A549 (cell line): ENCODE measurements at regions of chr11 and their contacts with region 1.

Region 1: GRCh38 chr11:130390071-130390758 is 38.2 kb downstream of the ADAMTS8 start:
- DNase-seq: peak; percentile 40 to 52
- ATAC-seq: peak; percentile 76 to 91; a peak in 5 of 6 replicates
- H3K4me3 ChIP-seq: no peak overlapping the region
- H3K27ac ChIP-seq: no peak overlapping the region
- H3K4me1 ChIP-seq: 0 out of 3 replicates have a peak, but pooled peaks cover 8% of the 10 kb centered on the region
- CTCF ChIP-seq: peak; percentile 46
- EP300 ChIP-seq: no peak
- POLR2A ChIP-seq: no peak
- RAD21 ChIP-seq: peak; percentile 47 to 59

Region 2: DNA sequence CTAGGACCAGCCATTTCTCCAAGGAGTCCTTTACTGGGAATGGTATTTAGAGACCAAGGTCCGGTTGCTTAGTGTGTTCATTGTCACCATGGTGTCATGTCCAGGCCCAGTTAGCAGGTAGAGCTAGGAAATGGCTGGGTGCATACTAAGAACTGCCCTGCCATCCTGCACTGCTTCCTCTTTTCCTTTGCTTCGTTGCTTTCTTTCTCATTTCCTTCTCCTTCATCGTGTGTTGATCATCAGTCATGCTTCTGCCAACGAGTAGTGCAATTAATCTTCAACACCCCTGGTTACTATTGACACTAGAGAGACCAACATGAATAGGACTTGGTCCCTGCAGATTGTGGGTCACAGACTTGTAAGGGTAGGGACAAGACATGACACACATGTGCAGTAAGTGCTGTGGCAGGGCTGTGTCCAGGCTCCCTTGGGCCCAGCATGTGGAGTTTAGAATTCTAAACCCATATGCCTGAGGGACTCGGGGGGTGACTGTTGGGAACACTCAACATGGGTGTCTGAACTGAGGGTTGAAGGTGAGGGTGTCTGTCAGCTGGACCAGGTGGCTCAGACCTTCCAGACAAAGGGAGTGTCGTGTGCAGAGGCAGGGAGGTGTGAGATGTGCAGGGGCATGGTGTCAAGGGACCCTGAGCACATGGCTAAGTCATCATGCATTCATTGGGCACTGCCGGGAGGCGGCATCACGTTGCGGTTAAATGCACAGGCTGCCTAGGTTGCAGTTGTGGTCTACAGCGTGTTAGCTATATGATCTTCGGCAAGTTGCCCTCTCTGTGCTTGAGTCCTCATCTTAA is 188.0 kb before region 1 on chr11:
- CTCF ChIA-PET with region 1: no interaction called
- POLR2A ChIA-PET with region 1: no interaction called
- DNase-seq: no peak
- ATAC-seq: no peak
- H3K4me3 ChIP-seq: no peak overlapping the region
- H3K27ac ChIP-seq: no peak overlapping the region
- H3K4me1 ChIP-seq: no peaks in the 10 kb centered on the region
- CTCF ChIP-seq: no peak
- EP300 ChIP-seq: no peak
- POLR2A ChIP-seq: no peak
- RAD21 ChIP-seq: no peak

Region 3: GRCh38 chr11:130400781-130401483 is 10.7 kb after region 1 on chr11:
- CTCF ChIA-PET with region 1: interaction called, 10 read pairs
- POLR2A ChIA-PET with region 1: no interaction called
- DNase-seq: no peak
- ATAC-seq: no peak
- H3K4me3 ChIP-seq: no peak overlapping the region
- H3K27ac ChIP-seq: no peak overlapping the region
- H3K4me1 ChIP-seq: no peaks in the 10 kb centered on the region
- CTCF ChIP-seq: no peak
- EP300 ChIP-seq: no peak
- POLR2A ChIP-seq: no peak
- RAD21 ChIP-seq: no peak

Region 4: DNA sequence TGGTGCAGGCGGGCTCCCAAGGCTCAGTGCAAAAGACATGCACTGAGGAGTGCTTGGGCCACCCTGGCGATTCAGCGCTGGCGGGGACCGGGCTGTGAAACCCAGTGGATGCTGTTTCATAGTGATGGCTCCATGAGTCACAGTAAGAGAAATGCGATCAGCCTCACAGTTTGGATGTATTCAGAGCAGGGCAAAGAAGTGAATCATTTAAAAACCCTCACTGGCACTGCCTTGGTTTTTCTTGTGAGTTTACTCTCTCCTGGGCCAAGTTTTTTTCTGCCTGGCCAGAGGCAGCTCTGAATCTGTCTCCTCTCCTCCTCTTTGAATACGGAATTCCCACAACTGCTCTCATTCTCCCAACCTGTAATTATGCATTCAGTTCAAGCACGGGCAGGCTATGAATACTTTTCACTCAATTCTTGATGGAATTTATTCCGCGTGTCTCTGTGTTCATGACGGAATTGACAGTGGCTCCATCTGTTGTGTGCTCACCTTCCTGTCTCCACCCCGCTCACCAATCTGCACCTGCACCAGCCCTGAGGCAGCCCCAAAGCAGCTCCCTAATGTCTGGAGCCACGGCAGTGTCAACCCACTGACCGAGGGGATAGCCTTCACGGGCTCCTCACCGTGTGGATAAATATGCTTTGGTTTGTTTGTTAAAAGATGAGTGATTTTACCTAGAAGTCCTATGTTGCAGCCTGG is 23.3 kb after region 1 on chr11:
- CTCF ChIA-PET with region 1: interaction called, 16 read pairs
- POLR2A ChIA-PET with region 1: interaction called, 3 read pairs
- DNase-seq: peak; percentile 36 to 50
- ATAC-seq: peak; percentile 91 to 92
- H3K4me3 ChIP-seq: no peak overlapping the region
- H3K27ac ChIP-seq: peak overlapping the region in 1 of 2 experiments; percentile 37; a peak in 1 of 6 replicates
- H3K4me1 ChIP-seq: peaks cover 13% of the 10 kb centered on the region
- CTCF ChIP-seq: no peak
- EP300 ChIP-seq: no peak
- POLR2A ChIP-seq: no peak
- RAD21 ChIP-seq: no peak